Activated B cell treated with CpG ODN at 0.5 μM for 24 hours (primary cell): ENCODE measurements at regions of chr16 and their contacts with region 1.

Region 1: GRCh38 chr16:71669932-71670536 is 44.0 kb downstream of the MARVELD3 start:
- DNase-seq: no peak
- ATAC-seq: no peak
- H3K4me3 Mint-ChIP-seq: no peak overlapping the region
- H3K27ac Mint-ChIP-seq: no peak overlapping the region
- H3K4me1 Mint-ChIP-seq: no peaks in the 10 kb centered on the region
- H3K27me3 Mint-ChIP-seq: no peaks in the 10 kb centered on the region
- CTCF ChIP-seq: no peak

Region 2: DNA sequence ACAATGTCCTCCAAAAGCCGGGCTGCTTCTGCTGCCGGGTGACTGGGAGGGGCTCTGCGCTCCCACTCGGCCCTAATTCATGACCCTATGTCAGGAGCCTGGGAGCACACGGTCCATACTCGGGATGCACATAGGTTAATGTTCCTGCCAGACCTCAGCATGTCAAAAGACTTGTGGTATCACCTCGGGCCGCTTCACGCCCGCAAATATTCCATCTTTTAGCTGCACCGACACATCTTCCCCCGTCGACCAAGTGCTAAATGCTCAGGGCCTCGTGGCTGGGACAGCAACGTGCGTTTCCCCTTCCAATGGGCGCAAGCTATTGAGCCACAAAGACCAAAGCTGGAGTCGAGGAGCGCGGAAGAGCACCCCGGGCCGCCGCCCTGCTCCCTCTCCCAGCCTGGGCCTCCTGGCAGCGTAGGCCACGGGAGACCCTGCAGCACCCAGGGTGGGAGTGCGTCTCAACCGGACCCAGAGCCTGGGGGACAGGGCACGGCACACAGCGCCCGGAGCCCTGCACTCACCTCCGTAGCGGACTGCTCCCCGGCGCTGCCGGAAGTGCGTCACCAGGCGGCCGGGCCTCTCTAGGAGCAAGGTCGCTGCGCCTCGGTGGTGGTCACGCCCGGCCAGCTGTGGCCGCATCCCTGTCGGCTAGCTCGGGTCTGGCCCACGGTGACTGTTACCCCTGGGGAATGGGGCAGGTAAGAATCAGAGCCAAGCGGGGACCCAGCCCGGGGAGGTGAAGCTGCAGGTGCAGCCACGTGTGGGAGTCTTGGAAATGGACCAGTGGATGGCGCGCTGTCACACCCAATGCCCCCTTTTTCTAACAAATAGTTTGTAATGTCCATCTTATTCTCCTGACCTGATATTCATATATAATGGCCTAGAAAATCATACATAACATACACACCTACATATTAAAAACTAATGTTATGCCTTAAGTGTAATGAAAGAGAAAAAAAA is 208.1 kb before region 1 on chr16 and contains the start of gene ZNF23:
- CTCF ChIA-PET with region 1: no interaction called
- POLR2A ChIA-PET with region 1: no interaction called
- intact Hi-C with region 1: no loop called
- DNase-seq: peak; percentile 90
- ATAC-seq: peak; percentile 97
- H3K4me3 Mint-ChIP-seq: peak within 1 kb of the TSS; percentile 93
- H3K27ac Mint-ChIP-seq: peak within 1 kb of the TSS; percentile 94
- H3K4me1 Mint-ChIP-seq: peaks cover 22% of the 10 kb centered on the region
- H3K27me3 Mint-ChIP-seq: no peaks in the 10 kb centered on the region
- CTCF ChIP-seq: no peak
- total RNA-seq, gene ZNF23: 13.3 and 14.6 TPM in 2 replicates

Region 3: DNA sequence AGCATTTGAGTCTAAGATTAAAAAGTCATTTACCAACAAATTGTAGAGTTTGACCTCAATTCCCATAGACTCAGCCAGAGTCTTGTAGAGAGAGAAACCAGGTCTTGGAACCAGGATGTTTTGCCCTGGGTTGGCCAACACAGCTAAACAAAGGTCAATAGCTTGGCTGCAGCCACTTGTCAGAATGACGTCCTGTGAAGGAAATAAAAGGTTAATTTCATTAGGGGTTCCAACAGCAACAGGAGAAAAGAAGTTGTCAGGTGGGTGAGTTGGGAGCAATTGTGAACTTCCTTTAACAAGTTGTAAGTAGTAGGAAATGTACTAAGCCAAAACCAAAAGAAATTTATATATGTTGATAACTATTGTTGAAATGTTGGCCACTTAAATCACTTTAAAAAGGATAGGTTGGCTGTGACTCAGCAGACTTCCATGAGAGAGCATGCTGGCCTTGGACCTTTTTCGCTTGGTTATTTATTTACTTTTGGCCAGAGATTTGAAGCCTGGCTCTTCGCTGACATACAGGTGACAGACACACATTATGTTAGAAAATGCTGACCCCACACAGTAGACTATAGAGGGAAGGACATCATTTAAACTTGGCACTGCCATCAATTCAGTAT is 97.4 kb before region 1 on chr16:
- CTCF ChIA-PET with region 1: no interaction called
- POLR2A ChIA-PET with region 1: no interaction called
- intact Hi-C with region 1: no loop called
- DNase-seq: no peak
- ATAC-seq: no peak
- H3K4me3 Mint-ChIP-seq: no peak overlapping the region
- H3K27ac Mint-ChIP-seq: no peak overlapping the region
- H3K4me1 Mint-ChIP-seq: peaks cover 21% of the 10 kb centered on the region
- H3K27me3 Mint-ChIP-seq: no peaks in the 10 kb centered on the region
- CTCF ChIP-seq: no peak

Region 4: GRCh38 chr16:71637398-71637797 is 32.6 kb before region 1 on chr16:
- CTCF ChIA-PET with region 1: no interaction called
- POLR2A ChIA-PET with region 1: no interaction called
- intact Hi-C with region 1: no loop called
- DNase-seq: no peak
- ATAC-seq: no peak
- H3K4me3 Mint-ChIP-seq: no peak overlapping the region
- H3K27ac Mint-ChIP-seq: no peak overlapping the region
- H3K4me1 Mint-ChIP-seq: no peaks in the 10 kb centered on the region
- H3K27me3 Mint-ChIP-seq: no peaks in the 10 kb centered on the region
- CTCF ChIP-seq: no peak

Region 5: GRCh38 chr16:71961066-71962039 is 291.3 kb after region 1 on chr16:
- CTCF ChIA-PET with region 1: interaction called, 3 read pairs
- POLR2A ChIA-PET with region 1: no interaction called
- intact Hi-C with region 1: loop called (anchors 10 kb)
- DNase-seq: peak; percentile 63
- ATAC-seq: peak; percentile 89
- H3K4me3 Mint-ChIP-seq: no peak overlapping the region
- H3K27ac Mint-ChIP-seq: no peak overlapping the region
- H3K4me1 Mint-ChIP-seq: peaks cover 27% of the 10 kb centered on the region
- H3K27me3 Mint-ChIP-seq: peaks cover 3% of the 10 kb centered on the region
- CTCF ChIP-seq: no peak

Region 6: DNA sequence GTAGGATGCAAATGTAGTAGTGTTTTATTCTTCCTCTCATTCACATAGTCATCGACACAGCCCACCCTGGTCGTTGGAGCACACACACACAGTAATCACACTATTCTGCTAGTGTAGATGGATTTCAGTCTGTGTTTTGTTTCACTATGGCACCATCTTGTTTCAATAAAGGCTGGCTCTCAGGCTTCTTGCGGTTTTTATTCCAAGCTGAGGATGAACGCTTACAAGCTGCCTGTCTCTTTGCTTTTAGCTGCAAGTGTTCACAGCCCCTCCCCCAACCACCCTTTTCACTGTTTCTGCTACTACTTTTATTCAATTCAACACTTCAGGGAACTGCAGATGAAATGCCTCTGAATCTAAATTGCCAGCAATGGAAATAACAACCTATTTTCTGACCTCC is 642.8 kb after region 1 on chr16:
- CTCF ChIA-PET with region 1: no interaction called
- POLR2A ChIA-PET with region 1: no interaction called
- intact Hi-C with region 1: no loop called
- DNase-seq: no peak
- ATAC-seq: no peak
- H3K4me3 Mint-ChIP-seq: no peak overlapping the region
- H3K27ac Mint-ChIP-seq: no peak overlapping the region
- H3K4me1 Mint-ChIP-seq: no peaks in the 10 kb centered on the region
- H3K27me3 Mint-ChIP-seq: no peaks in the 10 kb centered on the region
- CTCF ChIP-seq: no peak